ENCODE measurements at regions of chr21 and their contacts with region 1.

Region 1: GRCh38 chr21:43333298-43334062 is 93.5 kb downstream of the SIK1 start:
- DNase-seq: no peak

Region 2: DNA sequence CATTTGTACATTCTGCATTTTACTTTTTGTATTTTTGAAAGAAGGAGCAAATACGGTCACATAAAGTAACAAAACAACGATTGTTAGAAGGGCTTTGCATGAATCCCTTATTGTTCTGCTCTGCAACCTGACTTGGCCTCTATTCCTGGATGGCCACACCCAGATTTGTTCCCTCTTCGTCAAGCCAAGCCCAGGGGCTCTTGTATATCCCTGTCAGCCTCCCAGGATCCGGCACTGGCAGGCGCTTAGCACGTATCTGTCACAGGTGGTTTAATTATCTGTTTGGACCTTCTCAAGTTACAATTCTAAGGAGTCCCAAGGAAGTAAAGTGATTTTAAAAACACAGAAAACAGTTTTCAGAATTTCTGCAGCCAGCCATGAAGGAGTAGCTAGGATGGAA is 136.7 kb before region 1 on chr21:
- intact Hi-C with region 1: no loop called
- DNase-seq: peak; percentile 73

Region 3: GRCh38 chr21:43646550-43647260 is 313.2 kb after region 1 on chr21:
- intact Hi-C with region 1: loop called (anchors 5 kb)
- DNase-seq: peak; percentile 94

Measured in cardiac septum (tissue), 1 donor.